ENCODE measurements at regions of chr3 and their contacts with region 1.

Region 1: DNA sequence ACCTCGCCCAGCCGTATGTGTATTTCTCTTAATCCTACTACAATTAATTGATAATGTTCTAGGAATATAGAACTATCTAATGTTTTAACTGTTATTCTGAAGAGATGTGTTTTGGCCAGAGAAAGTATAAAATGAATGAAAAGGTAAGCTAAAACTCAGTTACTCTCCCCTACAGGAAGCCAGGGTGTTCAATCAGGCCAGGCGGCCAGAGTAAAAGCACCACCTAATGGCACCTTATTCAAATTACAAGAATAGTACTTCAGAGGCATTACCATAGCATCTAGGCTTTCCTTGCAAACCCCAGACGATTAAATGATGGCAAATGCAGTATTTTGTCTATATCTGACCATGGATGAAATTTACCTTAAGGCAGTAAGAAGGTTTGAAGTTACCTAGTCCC is 10.4 kb downstream of the SLC12A8 start:
- DNase-seq: peak; percentile 58
- CTCF ChIP-seq: peak; percentile 21

Region 2: GRCh38 chr3:124653797-124654469 is 548.3 kb before region 1 on chr3:
- CTCF ChIA-PET with region 1: no interaction called
- POLR2A ChIA-PET with region 1: no interaction called
- DNase-seq: no peak
- CTCF ChIP-seq: no peak

Region 3: GRCh38 chr3:125212509-125213244 is 10.5 kb after region 1 on chr3 and contains the start of gene SLC12A8:
- CTCF ChIA-PET with region 1: interaction called, 10 read pairs
- POLR2A ChIA-PET with region 1: interaction called, 3 read pairs
- DNase-seq: peak; percentile 47
- CTCF ChIP-seq: no peak